Natural killer cell (primary cell): ENCODE measurements at regions of chr19 and their contacts with region 1.

Region 1: DNA sequence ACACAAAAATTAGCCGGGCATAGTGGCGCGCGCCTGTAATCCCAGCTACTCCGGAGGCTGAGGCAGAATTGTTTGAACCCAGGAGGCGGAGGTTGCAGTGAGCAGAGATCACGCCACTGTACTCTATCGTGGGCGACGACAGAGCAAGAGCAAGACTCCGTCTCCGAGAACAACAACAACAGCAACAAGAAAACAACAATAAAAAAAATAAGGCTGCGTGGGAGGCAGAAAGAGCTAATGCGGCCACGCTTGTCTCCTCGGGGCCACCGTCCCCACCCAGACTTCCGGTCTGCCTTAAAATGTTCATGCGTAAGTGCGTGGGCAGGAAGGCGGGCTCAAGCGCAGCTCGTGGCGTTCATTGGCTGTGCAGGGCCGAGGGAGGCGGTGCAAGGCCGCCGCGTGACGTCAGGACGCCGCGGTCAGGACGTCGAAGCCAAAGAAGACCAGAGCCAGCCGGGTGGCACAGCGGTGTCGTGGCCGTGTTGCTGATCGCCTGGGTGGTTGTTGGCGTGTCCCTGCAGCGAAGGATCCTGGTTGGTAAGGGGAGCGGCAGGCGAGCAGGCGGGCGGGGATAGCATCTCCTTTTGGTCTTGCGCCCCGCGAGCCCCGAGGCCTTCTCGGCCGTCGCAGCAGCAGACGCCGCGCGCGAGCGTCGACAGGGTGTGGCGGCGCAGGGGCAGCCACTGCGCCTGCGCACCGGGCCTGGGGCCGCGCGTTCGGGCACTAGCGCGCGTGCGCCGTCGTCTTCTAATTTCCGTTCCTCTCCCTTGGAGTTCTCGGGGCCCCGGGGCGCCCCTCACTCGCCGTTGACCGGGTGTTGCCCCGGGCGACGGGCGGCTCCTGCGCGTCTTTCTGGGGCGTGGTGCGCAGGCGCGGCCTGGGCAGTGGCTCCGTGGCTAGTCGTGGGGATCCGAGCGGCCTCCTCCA is at the start of gene LENG8:
- DNase-seq: peak; percentile 98 to 100
- ATAC-seq: peak; percentile 88 to 96 (median 90)
- H3K4me3 ChIP-seq: peak within 1 kb of the TSS; percentile 89
- H3K4me3 Mint-ChIP-seq: peak within 1 kb of the TSS; percentile 97
- H3K27ac ChIP-seq: peak within 1 kb of the TSS; percentile 96
- H3K27ac Mint-ChIP-seq: peak within 1 kb of the TSS; percentile 100
- H3K4me1 ChIP-seq: peaks cover 36% of the 10 kb centered on the region
- H3K4me1 Mint-ChIP-seq: peaks cover 46 to 61% of the 10 kb centered on the region in 2 donors
- H3K27me3 ChIP-seq: no peaks in the 10 kb centered on the region
- H3K27me3 Mint-ChIP-seq: no peaks in the 10 kb centered on the region
- CTCF ChIP-seq: no peak
- total RNA-seq, gene LENG8: 479 to 563 (median 507) TPM

Region 2: DNA sequence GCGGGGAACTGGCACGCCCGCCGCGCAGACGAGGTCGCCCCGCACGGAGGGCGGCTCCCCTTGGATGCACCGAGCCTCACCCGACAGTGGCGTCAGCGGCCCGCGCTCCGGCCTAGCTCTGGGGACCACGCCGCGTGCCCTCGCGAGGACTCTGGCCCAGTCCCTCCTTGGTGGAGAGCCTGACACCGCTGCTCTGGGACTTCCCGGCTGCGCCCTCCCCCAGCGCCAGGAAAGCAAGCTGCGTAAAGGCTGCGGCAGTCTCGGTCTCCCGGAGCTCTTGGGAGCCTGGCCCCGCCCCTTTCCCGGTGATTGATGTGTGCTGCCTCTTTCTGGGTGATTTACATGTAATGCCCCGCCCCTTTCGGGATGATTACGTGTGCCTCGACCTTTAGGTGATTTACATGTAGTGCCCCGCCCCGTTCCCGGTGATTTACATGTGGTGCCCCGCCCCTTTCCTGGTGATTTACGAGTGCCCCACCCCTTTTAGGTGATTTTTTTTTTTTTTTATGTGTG is 14.6 kb after region 1 on chr19 and contains the start of gene LENG9:
- intact Hi-C with region 1: loop called (anchors 1 kb)
- DNase-seq: peak; percentile 94 to 99
- ATAC-seq: peak; percentile 69 to 83 (median 72)
- H3K4me3 ChIP-seq: peak within 1 kb of the TSS; percentile 48
- H3K4me3 Mint-ChIP-seq: peak within 1 kb of the TSS; percentile 83
- H3K27ac ChIP-seq: peak within 1 kb of the TSS; percentile 83
- H3K27ac Mint-ChIP-seq: peak within 1 kb of the TSS; percentile 88 to 97
- H3K4me1 ChIP-seq: peaks cover 30% of the 10 kb centered on the region
- H3K4me1 Mint-ChIP-seq: peaks cover 33 to 48% of the 10 kb centered on the region in 2 donors
- H3K27me3 ChIP-seq: no peaks in the 10 kb centered on the region
- H3K27me3 Mint-ChIP-seq: peaks cover under 1 to 6% of the 10 kb centered on the region in 2 donors
- CTCF ChIP-seq: no peak
- total RNA-seq, gene LENG9: 3.2 to 5.6 (median 4.3) TPM